ENCODE measurements at regions of chr11 and their contacts with region 1.

Region 1: GRCh38 chr11:105000797-105001196 is 22.2 kb downstream of the CASP5 start:
- DNase-seq: peak in 8 of 9 donors; percentile 14 to 56 (median 47)
- ATAC-seq: peak; percentile 85
- H3K4me3 ChIP-seq: no peak overlapping the region
- H3K4me3 Mint-ChIP-seq: no peak overlapping the region
- H3K27ac ChIP-seq: no peak overlapping the region
- H3K27ac Mint-ChIP-seq: peak overlapping the region in 1 of 9 donors; percentile 5
- H3K4me1 ChIP-seq: no peaks in the 10 kb centered on the region
- H3K4me1 Mint-ChIP-seq: peaks cover 4 to 11% (median 7%) of the 10 kb centered on the region in 7 donors
- H3K27me3 ChIP-seq: no peaks in the 10 kb centered on the region
- H3K27me3 Mint-ChIP-seq: no peaks in the 10 kb centered on the region

Region 2: DNA sequence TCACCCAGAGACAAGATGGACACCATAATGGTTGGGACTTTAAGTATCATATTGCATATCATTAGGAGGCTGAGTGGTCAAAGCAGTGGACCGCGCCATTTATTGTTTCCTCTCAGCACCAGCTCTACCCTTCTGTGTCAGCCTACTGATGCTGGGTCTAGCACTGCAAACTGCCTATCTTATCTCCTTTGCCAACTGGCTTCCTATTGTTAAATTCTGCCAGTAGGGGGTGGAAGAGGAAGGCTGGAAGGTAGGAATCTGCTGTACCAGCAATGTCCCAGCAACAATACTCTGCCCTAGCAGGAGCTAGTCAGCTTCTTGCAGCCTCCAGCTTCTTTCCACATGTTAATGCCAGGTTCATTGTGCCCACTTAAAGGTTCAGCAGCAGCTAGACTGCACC is 469.7 kb before region 1 on chr11:
- CTCF ChIA-PET with region 1: interaction called, 3 read pairs
- POLR2A ChIA-PET with region 1: no interaction called
- intact Hi-C with region 1: loop called in 1 of 2 experiments (anchors 1 kb)
- DNase-seq: peak in 6 of 9 donors; percentile 11 to 37 (median 22)
- ATAC-seq: peak; percentile 59
- H3K4me3 ChIP-seq: no peak overlapping the region
- H3K4me3 Mint-ChIP-seq: no peak overlapping the region
- H3K27ac ChIP-seq: no peak overlapping the region
- H3K27ac Mint-ChIP-seq: no peak overlapping the region
- H3K4me1 ChIP-seq: no peaks in the 10 kb centered on the region
- H3K4me1 Mint-ChIP-seq: no peaks in the 10 kb centered on the region
- H3K27me3 ChIP-seq: no peaks in the 10 kb centered on the region
- H3K27me3 Mint-ChIP-seq: peaks cover 0 to 4% (median 3%) of the 10 kb centered on the region in 5 donors

Region 3: GRCh38 chr11:104823638-104824037 is 177.2 kb before region 1 on chr11:
- CTCF ChIA-PET with region 1: no interaction called
- POLR2A ChIA-PET with region 1: no interaction called
- intact Hi-C with region 1: loop called in 1 of 2 experiments (anchors 2 kb)
- DNase-seq: no peak
- ATAC-seq: no peak
- H3K4me3 ChIP-seq: no peak overlapping the region
- H3K4me3 Mint-ChIP-seq: no peak overlapping the region
- H3K27ac ChIP-seq: no peak overlapping the region
- H3K27ac Mint-ChIP-seq: no peak overlapping the region
- H3K4me1 ChIP-seq: no peaks in the 10 kb centered on the region
- H3K4me1 Mint-ChIP-seq: peaks cover 0 to 4% (median 0%) of the 10 kb centered on the region in 7 donors
- H3K27me3 ChIP-seq: no peaks in the 10 kb centered on the region
- H3K27me3 Mint-ChIP-seq: peaks cover 0 to 7% (median 0%) of the 10 kb centered on the region in 5 donors

Measured in naive thymus-derived CD4-positive, alpha-beta T cell (primary cell).